A673 (cell line): ENCODE measurements at regions of chr18 and their contacts with region 1.

Region 1: GRCh38 chr18:34196256-34196655 is 28.5 kb downstream of the NOL4 start:
- DNase-seq: peak; percentile 70
- H3K4me3 ChIP-seq: no peak overlapping the region
- H3K27ac ChIP-seq: peak overlapping the region; percentile 80
- H3K4me1 ChIP-seq: peaks cover 78% of the 10 kb centered on the region
- H3K27me3 ChIP-seq: no peaks in the 10 kb centered on the region
- CTCF ChIP-seq: no peak

Region 2: GRCh38 chr18:34158881-34159690 is 37.2 kb before region 1 on chr18:
- CTCF ChIA-PET with region 1: no interaction called
- POLR2A ChIA-PET with region 1: no interaction called
- intact Hi-C with region 1: loop called (anchors 2 kb)
- DNase-seq: peak; percentile 90
- H3K4me3 ChIP-seq: peak overlapping the region; percentile 65
- H3K27ac ChIP-seq: peak overlapping the region; percentile 77
- H3K4me1 ChIP-seq: peaks cover 36% of the 10 kb centered on the region
- H3K27me3 ChIP-seq: no peaks in the 10 kb centered on the region
- CTCF ChIP-seq: peak; percentile 66

Region 3: DNA sequence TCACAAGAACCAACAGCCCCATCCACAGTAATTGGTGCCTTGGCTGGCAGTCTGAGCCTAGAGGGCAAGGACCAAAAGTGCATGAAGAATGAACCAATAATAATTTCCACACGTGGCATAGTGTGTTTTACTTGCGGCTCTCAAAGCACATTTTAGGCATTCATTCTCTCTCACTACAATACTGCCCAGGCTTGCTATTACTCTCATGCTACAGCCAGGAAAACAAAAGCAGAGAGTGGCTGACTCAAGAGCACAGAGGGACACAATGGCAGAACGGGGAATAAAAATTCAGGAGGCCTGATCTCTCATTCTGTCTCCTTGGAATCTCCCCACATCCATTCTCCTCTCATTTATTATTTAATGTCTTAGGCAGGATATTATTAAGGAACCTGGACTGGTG is 85.5 kb after region 1 on chr18:
- CTCF ChIA-PET with region 1: no interaction called
- POLR2A ChIA-PET with region 1: no interaction called
- intact Hi-C with region 1: no loop called
- DNase-seq: no peak
- H3K4me3 ChIP-seq: no peak overlapping the region
- H3K27ac ChIP-seq: no peak overlapping the region
- H3K4me1 ChIP-seq: no peaks in the 10 kb centered on the region
- H3K27me3 ChIP-seq: no peaks in the 10 kb centered on the region
- CTCF ChIP-seq: no peak